ENCODE measurements at regions of chr1 and their contacts with region 1.

Region 1: DNA sequence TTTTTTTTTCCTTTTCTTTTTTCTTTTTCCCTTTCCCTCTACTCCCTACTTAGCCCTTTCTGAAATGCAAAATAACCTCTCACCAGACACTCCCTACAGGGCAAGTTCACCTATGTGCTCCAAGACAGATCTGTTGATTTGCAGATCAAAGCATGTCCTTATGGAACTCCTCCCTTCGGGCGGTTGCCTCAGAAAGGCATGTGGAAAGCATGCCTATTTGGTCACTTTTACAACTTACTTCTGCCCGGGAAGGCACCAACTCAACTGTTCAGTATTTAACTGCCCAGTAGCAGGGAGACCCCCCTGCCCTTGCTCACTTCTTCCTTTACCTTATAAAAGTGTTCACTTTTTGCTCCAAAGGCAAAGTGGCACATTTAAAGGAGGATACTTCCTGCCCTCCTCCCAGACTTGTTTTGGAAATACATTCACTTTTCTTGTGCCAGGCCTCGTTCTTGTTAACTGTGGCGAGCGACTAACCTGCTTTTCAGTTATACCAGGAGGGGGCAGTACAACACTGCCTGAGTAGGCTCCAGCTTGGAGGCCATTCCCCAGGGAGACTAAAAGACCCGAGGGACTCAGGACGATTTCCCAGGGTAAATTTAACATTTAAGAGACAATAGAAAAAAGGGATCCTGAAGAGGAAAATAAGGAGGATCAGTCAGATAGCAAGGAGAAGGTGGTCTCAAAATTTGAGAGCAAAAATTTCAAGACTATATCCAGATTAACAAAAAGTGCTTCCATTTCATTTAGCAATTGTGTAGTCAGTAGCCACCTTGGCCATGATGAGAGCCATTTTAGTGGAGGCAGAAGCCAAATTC is 12.3 kb upstream of the SLAMF7 start:
- DNase-seq: peak; percentile 73 to 86 (median 77)
- ATAC-seq: peak; percentile 93
- H3K4me3 ChIP-seq: no peak overlapping the region
- H3K27ac ChIP-seq: peak overlapping the region; percentile 60
- H3K4me1 ChIP-seq: peaks cover 0 to 8% of the 10 kb centered on the region in 2 experiments; a peak in 2 of 5 replicates
- H3K27me3 ChIP-seq: no peaks in the 10 kb centered on the region; a peak in 1 of 5 replicates
- CTCF ChIP-seq: peak; percentile 85 to 92 (median 88)
- EP300 ChIP-seq: no peak
- POLR2A ChIP-seq: no peak
- RAD21 ChIP-seq: peak; percentile 91 to 96

Region 2: DNA sequence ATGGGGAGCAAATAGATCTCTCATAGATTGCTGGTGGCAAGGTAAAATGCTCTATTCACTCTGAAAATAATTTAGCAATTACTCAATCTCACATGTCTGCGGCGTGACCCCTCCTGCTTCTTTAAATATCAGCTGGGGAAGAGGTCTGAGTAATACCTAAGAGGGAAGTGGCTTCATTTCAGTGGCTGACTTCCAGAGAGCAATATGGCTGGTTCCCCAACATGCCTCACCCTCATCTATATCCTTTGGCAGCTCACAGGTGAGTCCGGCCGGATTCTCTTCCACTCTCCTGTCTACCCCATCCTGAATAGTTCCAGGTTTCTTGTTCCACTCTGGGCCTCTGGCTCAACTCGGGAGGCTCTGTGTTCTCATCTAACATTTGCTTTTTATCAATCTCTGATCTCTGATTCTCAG is 12.4 kb after region 1 on chr1 and contains the start of gene SLAMF7:
- CTCF ChIA-PET with region 1: no interaction called
- POLR2A ChIA-PET with region 1: no interaction called
- in situ Hi-C with region 1: no loop called
- intact Hi-C with region 1: no loop called
- DNase-seq: peak in 1 of 4 experiments; percentile 10
- ATAC-seq: no peak
- H3K4me3 ChIP-seq: no peak within 1 kb of the TSS
- H3K27ac ChIP-seq: no peak within 1 kb of the TSS
- H3K4me1 ChIP-seq: peaks cover 0 to 10% of the 10 kb centered on the region in 2 experiments; a peak in 2 of 5 replicates
- H3K27me3 ChIP-seq: peaks cover 0 to 5% of the 10 kb centered on the region in 2 experiments; a peak in 2 of 5 replicates
- CTCF ChIP-seq: no peak
- EP300 ChIP-seq: no peak
- POLR2A ChIP-seq: no peak
- RAD21 ChIP-seq: no peak
- polyA plus RNA-seq, gene SLAMF7: 0.17 to 0.39 TPM

Region 3: DNA sequence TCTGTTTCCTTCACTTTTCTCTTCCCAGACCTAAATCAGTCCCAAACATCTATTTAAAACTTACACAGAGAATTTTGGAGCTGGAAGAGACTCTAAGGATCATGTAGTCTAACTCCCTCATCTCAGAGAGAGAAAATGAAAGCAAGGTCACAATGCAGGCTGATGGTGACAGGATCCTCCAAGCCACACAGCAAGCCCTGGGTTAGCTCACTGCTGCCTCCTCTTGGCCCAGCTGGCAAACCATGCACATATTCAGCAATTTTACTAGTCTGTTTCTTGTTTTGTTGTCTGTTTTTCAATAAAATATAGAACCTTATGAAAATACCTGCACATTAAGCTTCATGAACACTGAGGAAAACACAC is 41.6 kb after region 1 on chr1:
- CTCF ChIA-PET with region 1: interaction called, 7 read pairs
- POLR2A ChIA-PET with region 1: interaction called, 4 read pairs
- in situ Hi-C with region 1: no loop called
- intact Hi-C with region 1: loop called (anchors 1 kb)
- DNase-seq: peak in 3 of 4 experiments; percentile 19 to 64 (median 49)
- ATAC-seq: peak; percentile 96
- H3K4me3 ChIP-seq: no peak overlapping the region
- H3K27ac ChIP-seq: no peak overlapping the region
- H3K4me1 ChIP-seq: peaks cover 0 to 4% of the 10 kb centered on the region in 2 experiments; a peak in 1 of 5 replicates
- H3K27me3 ChIP-seq: peaks cover 0 to 2% of the 10 kb centered on the region in 2 experiments; a peak in 2 of 5 replicates
- CTCF ChIP-seq: peak; percentile 77 to 90 (median 86)
- EP300 ChIP-seq: no peak
- POLR2A ChIP-seq: no peak
- RAD21 ChIP-seq: peak; percentile 90 to 92

Region 4: DNA sequence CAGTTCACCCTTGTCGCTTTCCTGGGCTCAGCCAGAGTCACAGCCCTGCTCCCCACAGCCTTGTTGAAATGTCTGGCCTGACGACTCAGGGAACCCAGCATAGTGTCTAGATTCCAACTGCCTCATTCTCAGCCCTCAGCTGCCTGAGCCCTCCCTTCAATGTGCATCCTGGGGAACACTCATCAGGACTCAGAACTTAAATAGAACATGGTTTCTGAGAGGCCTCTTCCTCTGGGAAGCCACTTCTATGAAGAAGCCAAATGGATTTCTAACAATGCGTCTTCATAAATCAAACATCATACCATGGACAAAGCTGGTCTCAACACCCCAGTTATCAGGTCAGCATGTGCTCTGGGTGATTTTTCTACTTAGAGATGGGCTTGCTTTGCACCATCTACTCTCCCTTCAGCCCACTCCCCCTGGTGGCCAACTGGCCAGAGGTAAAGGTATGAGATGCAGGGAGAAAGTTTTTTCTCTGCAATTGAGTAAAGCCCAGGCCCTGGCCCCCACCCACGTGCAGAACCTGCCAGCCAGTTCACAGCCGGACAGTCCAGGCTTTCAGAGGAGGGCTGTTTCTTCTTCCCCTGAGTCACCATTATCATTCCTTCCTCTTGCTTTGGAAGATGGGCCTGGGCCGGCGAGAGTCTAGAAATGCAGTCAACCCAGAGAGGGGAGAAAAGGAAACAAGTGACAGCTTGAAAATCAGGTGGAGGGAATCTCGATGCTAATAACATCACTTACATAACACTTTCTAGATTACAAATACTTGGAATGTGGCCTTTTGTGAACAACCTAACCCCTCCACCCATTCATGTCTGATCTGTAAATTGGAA is 103.8 kb after region 1 on chr1:
- CTCF ChIA-PET with region 1: interaction called, 8 read pairs
- POLR2A ChIA-PET with region 1: no interaction called
- in situ Hi-C with region 1: no loop called
- intact Hi-C with region 1: loop called (anchors 1 kb)
- DNase-seq: peak; percentile 45 to 72 (median 62)
- ATAC-seq: peak; percentile 95
- H3K4me3 ChIP-seq: no peak overlapping the region
- H3K27ac ChIP-seq: no peak overlapping the region
- H3K4me1 ChIP-seq: no peaks in the 10 kb centered on the region
- H3K27me3 ChIP-seq: peaks cover 0 to 12% of the 10 kb centered on the region in 2 experiments; a peak in 2 of 5 replicates
- CTCF ChIP-seq: peak; percentile 76 to 81 (median 81)
- EP300 ChIP-seq: no peak
- POLR2A ChIP-seq: no peak
- RAD21 ChIP-seq: peak; percentile 73 to 74

Region 5: GRCh38 chr1:160951443-160952128 is 224.9 kb after region 1 on chr1:
- CTCF ChIA-PET with region 1: interaction called, 6 read pairs
- POLR2A ChIA-PET with region 1: interaction called, 4 read pairs
- in situ Hi-C with region 1: no loop called
- intact Hi-C with region 1: loop called (anchors 2 kb)
- DNase-seq: peak; percentile 62 to 70 (median 65)
- ATAC-seq: peak; percentile 90
- H3K4me3 ChIP-seq: no peak overlapping the region
- H3K27ac ChIP-seq: no peak overlapping the region
- H3K4me1 ChIP-seq: peaks cover 0 to 9% of the 10 kb centered on the region in 2 experiments; a peak in 2 of 5 replicates
- H3K27me3 ChIP-seq: peaks cover 10 to 30% of the 10 kb centered on the region in 2 experiments; a peak in 3 of 5 replicates
- CTCF ChIP-seq: peak; percentile 78 to 85 (median 80)
- EP300 ChIP-seq: no peak
- POLR2A ChIP-seq: no peak
- RAD21 ChIP-seq: peak; percentile 78 to 86